Heart right ventricle (tissue), 16 donors: ENCODE measurements at regions of chr14 and their contacts with region 1.

Region 1: DNA sequence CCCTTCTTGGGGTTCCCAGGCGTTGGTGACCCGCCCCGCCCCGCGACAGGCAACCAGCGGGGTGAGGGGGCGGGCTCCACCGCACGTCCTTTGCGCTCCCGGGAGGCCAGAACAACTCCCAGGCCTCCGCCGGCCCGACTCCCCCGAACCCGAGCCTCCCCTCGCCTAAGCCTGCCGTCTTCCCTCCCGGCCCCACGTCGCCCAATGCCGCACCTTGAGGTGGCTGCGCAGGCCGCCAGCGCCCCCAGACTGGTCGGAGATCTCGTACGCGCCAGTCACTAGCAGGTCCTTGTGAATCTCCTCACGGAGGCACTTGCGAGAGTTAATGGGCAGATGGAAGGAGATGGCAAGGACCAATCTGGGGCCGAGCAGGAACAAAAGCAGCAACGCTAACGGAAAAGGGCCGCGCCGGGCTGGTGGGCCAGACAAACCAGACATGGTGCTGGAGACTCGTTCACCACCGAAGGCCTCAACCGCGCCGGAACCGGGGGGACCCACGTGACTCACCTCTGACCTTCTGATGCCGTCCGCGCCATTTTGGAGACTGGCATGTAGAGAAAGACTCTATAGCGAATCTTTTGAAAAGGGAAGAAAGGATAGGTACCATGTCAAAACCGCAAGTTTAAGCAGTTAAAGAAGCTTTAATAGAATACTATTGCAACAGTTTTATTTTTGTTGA is at the start of gene TMED10:
- DNase-seq: peak; percentile 88 to 91
- ATAC-seq: peak; percentile 95 to 99 (median 96)
- H3K4me3 ChIP-seq: peak within 1 kb of the TSS; percentile 34 to 99 (median 82)
- H3K27ac ChIP-seq: peak within 1 kb of the TSS; percentile 74 to 100 (median 94)
- H3K4me1 ChIP-seq: peaks cover 7 to 47% (median 25%) of the 10 kb centered on the region in 9 donors
- H3K27me3 ChIP-seq: no peaks in the 10 kb centered on the region
- CTCF ChIP-seq: peak in 3 of 9 donors; percentile 14 to 30 (median 26)
- total RNA-seq, gene TMED10: 219 to 366 (median 294) TPM

Region 2: GRCh38 chr14:75063407-75064213 is 112.7 kb before region 1 on chr14 and contains the start of gene ACYP1:
- intact Hi-C with region 1: no loop called
- DNase-seq: peak; percentile 92 to 94
- ATAC-seq: peak; percentile 91 to 98 (median 96)
- H3K4me3 ChIP-seq: peak within 1 kb of the TSS; percentile 47 to 94 (median 74)
- H3K27ac ChIP-seq: peak within 1 kb of the TSS in 9 of 10 donors; percentile 14 to 86 (median 72)
- H3K4me1 ChIP-seq: peaks cover 2 to 41% (median 25%) of the 10 kb centered on the region in 9 donors
- H3K27me3 ChIP-seq: no peaks in the 10 kb centered on the region
- CTCF ChIP-seq: peak in 1 of 9 donors; percentile 14
- total RNA-seq, gene ACYP1: 7.9 to 12.6 (median 10.0) TPM

Region 3: DNA sequence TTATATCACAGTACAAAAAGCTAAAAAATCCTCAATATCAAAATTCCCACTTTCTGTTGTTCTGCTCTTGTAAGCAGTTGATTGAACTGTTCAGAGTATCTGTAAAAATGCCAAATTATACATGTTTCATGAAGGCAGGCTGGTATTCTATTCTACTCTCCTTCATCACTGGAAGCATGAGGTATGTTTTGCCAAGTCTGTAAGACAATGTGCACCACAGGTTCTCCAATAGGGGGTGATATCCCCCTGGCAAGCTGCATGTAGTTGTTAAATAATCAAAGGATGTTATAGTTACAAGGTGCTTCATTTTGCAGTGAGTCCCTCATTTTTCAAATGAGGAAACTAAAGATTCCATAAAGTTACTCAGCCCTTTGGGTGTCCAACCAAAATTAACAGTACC is 34.3 kb before region 1 on chr14:
- intact Hi-C with region 1: loop called in 1 of 10 experiments (anchors 1 kb)
- DNase-seq: no peak
- ATAC-seq: peak in 1 of 8 donors; percentile 53
- H3K4me3 ChIP-seq: no peak overlapping the region
- H3K27ac ChIP-seq: peak overlapping the region in 3 of 10 donors; percentile 3 to 56 (median 5)
- H3K4me1 ChIP-seq: peaks cover 2 to 90% (median 54%) of the 10 kb centered on the region in 9 donors
- H3K27me3 ChIP-seq: no peaks in the 10 kb centered on the region
- CTCF ChIP-seq: peak in 8 of 9 donors; percentile 5 to 58 (median 48)

Region 4: DNA sequence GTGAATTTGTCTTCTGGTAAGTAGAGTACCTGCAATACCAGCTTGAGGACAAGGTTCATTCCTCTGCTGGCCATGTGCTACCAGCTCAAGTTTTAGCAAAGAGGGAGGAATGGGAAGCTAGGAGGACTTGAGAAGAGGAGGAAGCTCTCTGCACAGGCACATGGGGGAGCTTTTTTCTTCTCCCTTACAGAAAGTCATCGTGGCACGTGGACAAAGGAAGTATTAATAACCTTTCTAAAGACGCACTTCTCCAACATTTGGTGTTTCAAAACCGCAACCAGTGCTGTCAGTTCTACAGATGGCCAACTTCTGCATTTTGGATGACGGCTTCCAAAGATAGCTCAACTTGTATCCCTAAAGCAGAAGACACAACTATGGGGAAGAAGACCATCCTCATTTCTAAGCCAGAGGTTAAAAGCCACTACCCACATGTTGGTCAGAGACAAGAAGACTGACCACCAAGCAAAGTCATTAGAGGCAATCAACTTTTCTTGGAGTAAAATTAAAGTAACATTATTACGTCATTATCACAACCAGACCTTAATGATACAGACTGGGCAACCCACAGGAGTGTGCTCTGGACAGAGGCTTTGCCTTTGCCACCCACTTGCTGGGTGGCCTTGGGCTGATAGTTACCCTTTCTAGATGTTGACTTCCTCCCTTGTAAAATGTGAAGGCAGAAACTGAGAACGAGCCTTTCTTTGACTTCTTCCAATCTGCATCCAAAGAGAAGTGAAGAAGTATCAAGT is 12.4 kb after region 1 on chr14:
- intact Hi-C with region 1: no loop called
- DNase-seq: peak in 1 of 2 donors; percentile 37
- ATAC-seq: peak in 7 of 8 donors; percentile 57 to 80 (median 68)
- H3K4me3 ChIP-seq: no peak overlapping the region
- H3K27ac ChIP-seq: peak overlapping the region in 3 of 10 donors; percentile 18 to 80 (median 41)
- H3K4me1 ChIP-seq: peaks cover 0 to 35% (median 0%) of the 10 kb centered on the region in 9 donors
- H3K27me3 ChIP-seq: no peaks in the 10 kb centered on the region
- CTCF ChIP-seq: no peak

Region 5: GRCh38 chr14:75230140-75231045 is 54.1 kb after region 1 on chr14:
- intact Hi-C with region 1: loop called in 4 of 10 experiments (anchors 5 to 10 kb)
- DNase-seq: peak in 1 of 2 donors; percentile 83
- ATAC-seq: peak in 5 of 8 donors; percentile 46 to 80 (median 60)
- H3K4me3 ChIP-seq: no peak overlapping the region
- H3K27ac ChIP-seq: peak overlapping the region in 6 of 10 donors; percentile 21 to 60 (median 43)
- H3K4me1 ChIP-seq: peaks cover 0 to 53% (median 9%) of the 10 kb centered on the region in 9 donors
- H3K27me3 ChIP-seq: no peaks in the 10 kb centered on the region
- CTCF ChIP-seq: peak in 4 of 9 donors; percentile 14 to 22 (median 20)

Region 6: DNA sequence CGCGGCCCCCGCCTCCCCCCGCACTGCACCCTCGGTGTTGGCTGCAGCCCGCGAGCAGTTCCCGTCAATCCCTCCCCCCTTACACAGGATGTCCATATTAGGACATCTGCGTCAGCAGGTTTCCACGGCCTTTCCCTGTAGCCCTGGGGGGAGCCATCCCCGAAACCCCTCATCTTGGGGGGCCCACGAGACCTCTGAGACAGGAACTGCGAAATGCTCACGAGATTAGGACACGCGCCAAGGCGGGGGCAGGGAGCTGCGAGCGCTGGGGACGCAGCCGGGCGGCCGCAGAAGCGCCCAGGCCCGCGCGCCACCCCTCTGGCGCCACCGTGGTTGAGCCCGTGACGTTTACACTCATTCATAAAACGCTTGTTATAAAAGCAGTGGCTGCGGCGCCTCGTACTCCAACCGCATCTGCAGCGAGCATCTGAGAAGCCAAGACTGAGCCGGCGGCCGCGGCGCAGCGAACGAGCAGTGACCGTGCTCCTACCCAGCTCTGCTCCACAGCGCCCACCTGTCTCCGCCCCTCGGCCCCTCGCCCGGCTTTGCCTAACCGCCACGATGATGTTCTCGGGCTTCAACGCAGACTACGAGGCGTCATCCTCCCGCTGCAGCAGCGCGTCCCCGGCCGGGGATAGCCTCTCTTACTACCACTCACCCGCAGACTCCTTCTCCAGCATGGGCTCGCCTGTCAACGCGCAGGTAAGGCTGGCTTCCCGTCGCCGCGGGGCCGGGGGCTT is 102.3 kb after region 1 on chr14 and contains the start of gene FOS:
- intact Hi-C with region 1: loop called in 3 of 10 experiments (anchors 5 kb)
- DNase-seq: peak; percentile 87 to 96
- ATAC-seq: peak; percentile 73 to 88 (median 83)
- H3K4me3 ChIP-seq: peak within 1 kb of the TSS; percentile 70 to 91 (median 82)
- H3K27ac ChIP-seq: peak within 1 kb of the TSS; percentile 97 to 100 (median 100)
- H3K4me1 ChIP-seq: peaks cover 3 to 76% (median 38%) of the 10 kb centered on the region in 9 donors
- H3K27me3 ChIP-seq: no peaks in the 10 kb centered on the region
- CTCF ChIP-seq: no peak
- total RNA-seq, gene FOS: 9.3 to 173 (median 64.0) TPM